T-cell (primary cell): ENCODE measurements at regions of chr14 and their contacts with region 1.

Region 1: DNA sequence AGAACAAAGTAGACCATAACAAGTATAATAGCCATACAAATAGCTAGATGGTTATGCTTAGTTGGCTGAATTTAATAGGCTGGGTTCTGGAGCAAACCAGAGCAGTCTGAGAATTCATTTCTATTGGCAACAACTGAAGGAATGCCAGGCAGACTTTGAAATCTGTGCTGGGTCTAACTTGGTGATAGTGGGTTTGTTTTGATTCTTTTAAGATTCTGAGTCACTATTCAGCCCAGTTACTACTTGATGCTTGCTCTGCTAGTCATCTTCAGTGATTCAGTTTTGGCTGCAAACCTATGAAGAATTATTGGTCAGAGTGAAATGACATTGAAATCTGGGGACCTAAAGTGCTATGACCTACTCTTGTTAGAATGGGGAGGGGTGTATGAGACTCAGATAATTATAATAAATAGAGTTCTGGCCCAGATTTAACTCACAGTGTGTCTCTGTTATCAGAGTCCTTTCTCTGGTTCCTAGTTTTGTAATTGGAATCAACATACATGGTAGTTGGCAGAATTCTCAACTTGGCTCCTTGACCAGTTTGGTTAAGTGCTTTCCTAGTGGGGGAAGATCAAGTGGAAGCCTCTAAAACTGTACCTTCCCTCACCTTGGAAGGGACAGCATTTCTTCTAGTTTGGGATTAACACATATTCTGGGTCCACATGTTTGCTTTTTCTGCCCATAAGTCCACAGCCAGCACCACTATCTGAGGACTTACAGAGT is 43.5 kb downstream of the MNAT1 start:
- DNase-seq: no peak
- ATAC-seq: no peak
- H3K4me3 ChIP-seq: no peak overlapping the region
- H3K4me3 Mint-ChIP-seq: no peak overlapping the region
- H3K27ac ChIP-seq: no peak overlapping the region
- H3K27ac Mint-ChIP-seq: no peak overlapping the region
- H3K4me1 ChIP-seq: no peaks in the 10 kb centered on the region
- H3K4me1 Mint-ChIP-seq: peaks cover 18 to 21% (median 20%) of the 10 kb centered on the region in 3 donors
- H3K27me3 ChIP-seq: no peaks in the 10 kb centered on the region
- H3K27me3 Mint-ChIP-seq: no peaks in the 10 kb centered on the region

Region 2: GRCh38 chr14:60757617-60758016 is 20.4 kb before region 1 on chr14:
- CTCF ChIA-PET with region 1: no interaction called
- POLR2A ChIA-PET with region 1: interaction called, 3 to 10 read pairs
- DNase-seq: no peak
- ATAC-seq: no peak
- H3K4me3 ChIP-seq: no peak overlapping the region
- H3K4me3 Mint-ChIP-seq: no peak overlapping the region
- H3K27ac ChIP-seq: no peak overlapping the region
- H3K27ac Mint-ChIP-seq: no peak overlapping the region
- H3K4me1 ChIP-seq: peaks cover 22 to 26% of the 10 kb centered on the region in 2 experiments
- H3K4me1 Mint-ChIP-seq: peaks cover 44 to 58% (median 57%) of the 10 kb centered on the region in 3 donors
- H3K27me3 ChIP-seq: no peaks in the 10 kb centered on the region
- H3K27me3 Mint-ChIP-seq: no peaks in the 10 kb centered on the region

Region 3: DNA sequence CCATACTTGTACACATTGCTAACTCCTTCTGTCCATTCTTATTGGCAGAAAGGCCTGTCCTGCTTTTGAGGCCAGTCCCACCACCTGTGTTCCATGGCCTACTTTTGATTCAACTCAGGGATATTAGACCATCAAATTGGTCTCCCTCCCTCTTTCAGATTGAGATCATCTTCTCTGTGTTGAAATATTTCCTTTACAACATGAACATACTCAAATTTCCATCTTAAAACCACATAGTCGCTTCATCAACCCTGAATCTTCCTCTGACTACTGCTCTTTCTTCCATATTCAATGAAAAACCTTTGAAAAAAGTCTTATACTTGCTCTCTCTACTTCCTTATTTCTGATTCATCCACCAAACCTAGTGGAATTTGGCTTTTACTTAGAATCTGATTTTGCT is 168.0 kb after region 1 on chr14:
- CTCF ChIA-PET with region 1: no interaction called
- POLR2A ChIA-PET with region 1: no interaction called
- DNase-seq: no peak
- ATAC-seq: no peak
- H3K4me3 ChIP-seq: no peak overlapping the region
- H3K4me3 Mint-ChIP-seq: no peak overlapping the region
- H3K27ac ChIP-seq: no peak overlapping the region
- H3K27ac Mint-ChIP-seq: no peak overlapping the region
- H3K4me1 ChIP-seq: no peaks in the 10 kb centered on the region
- H3K4me1 Mint-ChIP-seq: no peaks in the 10 kb centered on the region
- H3K27me3 ChIP-seq: no peaks in the 10 kb centered on the region
- H3K27me3 Mint-ChIP-seq: no peaks in the 10 kb centered on the region